CD8-positive, alpha-beta memory T cell (primary cell): ENCODE measurements at regions of chr10 and their contacts with region 1.

Region 1: DNA sequence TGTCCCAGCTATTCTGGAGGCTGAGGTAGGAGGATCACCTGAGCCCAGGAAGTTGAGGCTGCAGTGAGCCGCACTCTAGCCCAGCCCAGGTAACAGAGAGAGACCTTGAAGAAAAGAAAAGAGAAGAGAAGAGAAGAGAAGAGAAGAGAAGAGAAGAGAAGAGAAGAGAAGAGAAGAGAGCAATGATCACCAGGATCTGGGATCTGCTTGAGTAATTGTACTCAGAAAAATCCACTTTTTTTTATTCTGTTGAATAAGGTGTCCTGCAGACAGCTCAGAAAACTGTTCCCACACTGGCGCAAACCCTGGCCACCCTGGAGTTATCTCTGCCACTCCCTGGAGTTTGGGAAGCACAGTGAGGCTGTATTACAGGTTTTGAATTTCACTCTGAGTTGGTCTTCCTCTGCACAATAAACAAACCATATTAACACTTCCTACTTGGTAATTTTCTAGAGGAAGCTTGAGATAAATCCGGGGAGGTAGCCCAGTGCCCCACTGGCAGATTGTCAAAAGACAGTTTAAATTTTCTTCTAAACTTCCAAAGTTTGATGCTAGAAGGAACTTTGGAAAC is 9.6 kb upstream of the OAT start:
- DNase-seq: no peak
- H3K4me3 ChIP-seq: no peak overlapping the region
- H3K4me3 Mint-ChIP-seq: no peak overlapping the region
- H3K27ac ChIP-seq: no peak overlapping the region
- H3K27ac Mint-ChIP-seq: no peak overlapping the region
- H3K4me1 ChIP-seq: no peaks in the 10 kb centered on the region
- H3K4me1 Mint-ChIP-seq: no peaks in the 10 kb centered on the region
- H3K27me3 ChIP-seq: no peaks in the 10 kb centered on the region
- H3K27me3 Mint-ChIP-seq: peaks cover 10 to 25% of the 10 kb centered on the region in 2 donors

Region 2: DNA sequence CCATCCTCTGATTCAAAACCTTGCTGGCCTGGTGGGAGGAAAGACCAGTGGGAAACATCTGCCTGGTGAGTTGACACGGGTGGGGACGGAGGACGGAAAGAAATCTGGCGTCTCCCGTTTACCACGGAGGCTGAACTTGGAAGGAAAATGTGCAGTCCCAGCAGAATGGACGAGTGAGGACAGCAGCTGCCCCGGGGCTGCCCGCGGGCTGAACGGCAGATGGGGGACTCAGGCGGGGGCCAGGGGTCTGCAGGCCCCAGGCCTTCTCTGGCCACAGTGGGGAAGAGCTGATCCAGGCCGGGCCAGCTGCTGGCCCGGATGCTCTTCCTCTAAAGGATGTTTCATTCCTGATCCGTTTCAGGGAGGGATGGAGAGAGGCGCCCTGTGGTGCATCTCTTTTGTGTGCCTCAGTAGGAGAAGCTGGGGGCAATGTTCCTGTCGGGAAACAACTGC is 187.4 kb before region 1 on chr10:
- CTCF ChIA-PET with region 1: no interaction called
- POLR2A ChIA-PET with region 1: no interaction called
- DNase-seq: peak in 1 of 5 donors; percentile 21
- H3K4me3 ChIP-seq: no peak overlapping the region
- H3K4me3 Mint-ChIP-seq: no peak overlapping the region
- H3K27ac ChIP-seq: no peak overlapping the region
- H3K27ac Mint-ChIP-seq: no peak overlapping the region
- H3K4me1 ChIP-seq: no peaks in the 10 kb centered on the region
- H3K4me1 Mint-ChIP-seq: no peaks in the 10 kb centered on the region
- H3K27me3 ChIP-seq: no peaks in the 10 kb centered on the region
- H3K27me3 Mint-ChIP-seq: peaks cover 5 to 11% of the 10 kb centered on the region in 2 donors

Region 3: GRCh38 chr10:124340033-124340760 is 88.1 kb before region 1 on chr10:
- CTCF ChIA-PET with region 1: no interaction called
- POLR2A ChIA-PET with region 1: no interaction called
- DNase-seq: no peak
- H3K4me3 ChIP-seq: no peak overlapping the region
- H3K4me3 Mint-ChIP-seq: no peak overlapping the region
- H3K27ac ChIP-seq: no peak overlapping the region
- H3K27ac Mint-ChIP-seq: no peak overlapping the region
- H3K4me1 ChIP-seq: no peaks in the 10 kb centered on the region
- H3K4me1 Mint-ChIP-seq: peaks cover 0 to 8% (median 0%) of the 10 kb centered on the region in 3 donors
- H3K27me3 ChIP-seq: no peaks in the 10 kb centered on the region
- H3K27me3 Mint-ChIP-seq: peaks cover 2 to 4% of the 10 kb centered on the region in 2 donors

Region 4: DNA sequence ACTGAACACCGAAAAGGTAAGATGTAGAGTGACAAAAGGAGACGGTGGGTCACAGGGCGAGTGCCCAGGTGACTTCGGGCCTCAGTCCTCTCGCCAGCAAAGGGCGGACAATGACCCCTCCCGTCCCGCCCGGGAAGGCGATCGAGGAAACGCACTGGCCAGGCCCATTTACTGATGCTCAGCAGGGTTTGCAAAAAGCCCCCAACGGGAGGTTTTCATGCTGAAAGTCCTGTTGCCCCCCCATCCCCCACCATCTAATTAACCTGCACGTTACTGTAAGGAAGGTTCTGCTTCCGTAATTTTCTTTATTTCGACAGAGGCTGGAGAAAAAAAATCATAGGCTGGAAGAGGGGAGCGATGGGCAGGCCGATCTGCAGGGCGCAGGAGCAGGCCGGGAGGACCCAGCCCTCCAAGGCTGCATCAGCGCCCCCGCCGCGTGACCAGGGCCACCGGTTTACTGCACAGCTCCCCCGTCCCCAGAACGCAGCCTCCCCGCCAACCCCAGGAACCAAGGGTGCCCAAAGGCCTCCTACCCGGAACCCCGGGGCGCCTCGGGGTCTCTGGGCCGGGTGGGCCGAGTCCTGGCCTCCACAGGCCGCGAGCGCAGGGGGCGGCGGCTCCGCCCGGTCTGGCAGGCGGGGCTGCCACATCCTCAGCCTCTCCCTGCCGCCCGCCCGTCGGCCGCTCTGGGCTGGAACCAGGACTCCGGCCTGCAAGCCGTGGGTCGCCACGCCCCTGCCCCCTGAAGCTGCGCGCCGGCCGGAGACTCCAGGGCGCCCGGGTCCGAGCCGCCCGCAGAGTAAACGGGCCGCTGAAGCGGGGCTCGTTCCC is 10.2 kb before region 1 on chr10:
- CTCF ChIA-PET with region 1: interaction called, 5 read pairs
- POLR2A ChIA-PET with region 1: interaction called, 12 read pairs
- DNase-seq: peak; percentile 23 to 67 (median 38)
- H3K4me3 ChIP-seq: peak overlapping the region; percentile 63
- H3K4me3 Mint-ChIP-seq: peak overlapping the region; percentile 79 to 95 (median 85)
- H3K27ac ChIP-seq: peak overlapping the region; percentile 54
- H3K27ac Mint-ChIP-seq: peak overlapping the region in 7 of 8 donors; percentile 21 to 76 (median 57)
- H3K4me1 ChIP-seq: peaks cover 13% of the 10 kb centered on the region
- H3K4me1 Mint-ChIP-seq: peaks cover 21 to 37% (median 28%) of the 10 kb centered on the region in 3 donors
- H3K27me3 ChIP-seq: no peaks in the 10 kb centered on the region
- H3K27me3 Mint-ChIP-seq: peaks cover 3 to 6% of the 10 kb centered on the region in 2 donors